Head of caudate nucleus (tissue), 42 donors: ENCODE measurements at regions of chrX and their contacts with region 1.

Region 1: GRCh38 chrX:65581661-65582339 is 47.2 kb upstream of the LAS1L start:
- DNase-seq: peak in 39 of 42 donors; percentile 9 to 82 (median 61)

Region 2: GRCh38 chrX:65985922-65986588 is 404.3 kb after region 1 on chrX:
- intact Hi-C with region 1: loop called (anchors 10 kb)
- DNase-seq: peak in 17 of 42 donors; percentile 0 to 52 (median 19)